Endothelial cell of umbilical vein (primary cell): ENCODE measurements at regions of chr3 and their contacts with region 1.

Region 1: DNA sequence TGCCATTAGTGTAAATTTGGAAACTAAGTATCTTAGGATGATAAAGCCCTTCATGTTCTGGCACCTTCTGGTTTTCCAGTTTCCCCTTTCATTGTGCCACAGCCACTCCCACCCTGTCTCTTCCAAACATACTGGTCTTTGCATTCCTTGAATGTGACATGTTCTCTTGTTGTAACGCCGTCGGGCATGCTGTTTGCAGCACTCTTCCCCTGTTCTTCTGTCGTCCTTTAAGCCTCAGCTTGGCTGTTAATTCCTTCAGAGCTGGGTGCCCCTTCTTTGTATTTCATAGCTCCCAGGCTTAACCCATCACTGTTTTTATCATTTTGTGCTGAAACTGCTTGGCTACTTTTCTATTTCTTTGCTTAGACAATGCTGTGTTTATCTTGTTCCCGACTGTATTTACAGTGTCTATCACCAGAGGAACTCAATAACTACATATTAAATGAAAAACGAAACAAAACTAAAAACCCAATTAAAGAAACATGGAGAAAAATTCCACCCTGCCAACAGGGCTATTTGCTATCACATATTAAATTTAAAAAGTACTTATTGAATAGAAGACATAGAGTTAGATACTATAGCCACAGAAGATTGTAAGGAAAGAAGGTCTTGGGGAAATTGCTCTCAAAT is 95.4 kb upstream of the KCNAB1 start:
- DNase-seq: no peak
- H3K4me3 ChIP-seq: no peak overlapping the region
- H3K27ac ChIP-seq: no peak overlapping the region
- H3K4me1 ChIP-seq: no peaks in the 10 kb centered on the region
- H3K27me3 ChIP-seq: peaks cover 8 to 26% of the 10 kb centered on the region in 2 experiments
- CTCF ChIP-seq: no peak
- POLR2A ChIP-seq: no peak

Region 2: GRCh38 chr3:155744010-155744625 is 280.9 kb before region 1 on chr3:
- CTCF ChIA-PET with region 1: no interaction called
- POLR2A ChIA-PET with region 1: no interaction called
- dilution Hi-C with region 1: no loop called
- intact Hi-C with region 1: no loop called
- DNase-seq: peak; percentile 24
- H3K4me3 ChIP-seq: peak overlapping the region; percentile 34 to 64 (median 42)
- H3K27ac ChIP-seq: no peak overlapping the region
- H3K4me1 ChIP-seq: peaks cover 7% of the 10 kb centered on the region
- H3K27me3 ChIP-seq: peaks cover 27 to 46% of the 10 kb centered on the region in 2 experiments
- CTCF ChIP-seq: no peak
- POLR2A ChIP-seq: no peak

Region 3: GRCh38 chr3:157594413-157594812 is 1569.4 kb after region 1 on chr3:
- CTCF ChIA-PET with region 1: no interaction called
- POLR2A ChIA-PET with region 1: no interaction called
- dilution Hi-C with region 1: no loop called
- intact Hi-C with region 1: loop called (anchors 5 kb)
- DNase-seq: no peak
- H3K4me3 ChIP-seq: no peak overlapping the region
- H3K27ac ChIP-seq: no peak overlapping the region
- H3K4me1 ChIP-seq: no peaks in the 10 kb centered on the region
- H3K27me3 ChIP-seq: peaks cover 9 to 21% of the 10 kb centered on the region in 2 experiments
- CTCF ChIP-seq: no peak
- POLR2A ChIP-seq: no peak